Prostate gland (tissue), 2 donors: ENCODE measurements at regions of chr7 and their contacts with region 1.

Region 1: DNA sequence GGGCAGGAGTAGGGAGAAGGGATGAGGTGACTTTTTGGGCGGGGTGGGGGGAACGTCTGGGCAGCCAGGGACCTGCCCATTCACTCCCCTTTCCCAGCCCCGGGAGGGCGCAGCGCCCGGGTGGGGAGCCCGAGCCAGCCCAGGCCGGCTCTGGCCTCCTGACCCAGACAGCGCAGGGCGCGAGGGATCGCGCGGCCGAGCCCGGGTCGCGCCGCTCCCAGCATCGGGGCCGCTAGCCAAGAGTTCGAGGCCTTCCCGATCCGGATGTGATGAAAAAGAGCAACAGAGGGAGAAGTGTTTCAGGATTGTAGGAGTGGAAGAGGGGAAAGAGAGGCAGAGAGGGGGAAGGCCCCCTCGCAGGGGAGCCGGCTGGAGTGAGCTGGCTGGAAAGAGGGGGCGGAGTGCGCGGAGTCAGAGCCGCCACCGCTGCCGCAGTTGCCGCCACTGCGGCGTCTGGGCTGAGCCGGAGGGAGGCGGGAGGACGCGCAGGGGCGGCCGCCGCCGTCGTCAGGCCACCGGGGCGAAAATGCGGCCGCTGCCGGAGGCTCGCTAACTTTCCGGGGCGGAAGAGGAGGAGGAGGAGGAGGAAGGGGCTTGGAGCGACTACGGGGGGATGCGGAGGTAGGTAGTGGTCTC is at the start of gene MDFIC:
- DNase-seq: peak; percentile 11
- H3K4me3 ChIP-seq: peak within 1 kb of the TSS; percentile 57 to 65
- H3K27ac ChIP-seq: peak within 1 kb of the TSS; percentile 70 to 72
- H3K4me1 ChIP-seq: no peaks in the 10 kb centered on the region
- H3K27me3 ChIP-seq: no peaks in the 10 kb centered on the region
- CTCF ChIP-seq: no peak
- POLR2A ChIP-seq: no peak
- total RNA-seq, gene MDFIC: 17.2 to 24.8 TPM

Region 2: DNA sequence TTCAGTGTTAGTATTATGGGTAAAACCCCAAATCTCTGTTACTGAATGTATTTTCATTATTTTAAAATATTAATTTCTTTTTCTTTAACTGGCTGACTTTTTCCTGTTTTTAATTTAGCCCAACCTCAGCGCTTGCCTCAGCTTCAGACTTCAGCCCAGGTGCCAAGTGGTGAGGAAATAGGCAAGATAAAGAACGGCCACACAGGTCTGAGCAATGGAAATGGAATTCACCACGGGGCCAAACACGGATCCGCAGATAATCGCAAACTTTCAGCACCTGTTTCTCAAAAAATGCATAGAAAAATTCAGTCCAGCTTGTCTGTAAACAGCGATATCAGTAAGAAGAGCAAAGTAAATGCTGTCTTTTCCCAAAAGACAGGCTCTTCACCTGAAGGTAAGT is 57.3 kb after region 1 on chr7:
- intact Hi-C with region 1: no loop called
- DNase-seq: no peak
- H3K4me3 ChIP-seq: no peak overlapping the region
- H3K27ac ChIP-seq: no peak overlapping the region
- H3K4me1 ChIP-seq: no peaks in the 10 kb centered on the region
- H3K27me3 ChIP-seq: no peaks in the 10 kb centered on the region
- CTCF ChIP-seq: no peak
- POLR2A ChIP-seq: no peak

Region 3: GRCh38 chr7:115008465-115009114 is 86.5 kb after region 1 on chr7:
- intact Hi-C with region 1: loop called (anchors 5 kb)
- DNase-seq: no peak
- H3K4me3 ChIP-seq: no peak overlapping the region
- H3K27ac ChIP-seq: no peak overlapping the region
- H3K4me1 ChIP-seq: no peaks in the 10 kb centered on the region
- H3K27me3 ChIP-seq: no peaks in the 10 kb centered on the region
- CTCF ChIP-seq: no peak
- POLR2A ChIP-seq: no peak